ENCODE measurements at regions of chr6 and their contacts with region 1.

Region 1: DNA sequence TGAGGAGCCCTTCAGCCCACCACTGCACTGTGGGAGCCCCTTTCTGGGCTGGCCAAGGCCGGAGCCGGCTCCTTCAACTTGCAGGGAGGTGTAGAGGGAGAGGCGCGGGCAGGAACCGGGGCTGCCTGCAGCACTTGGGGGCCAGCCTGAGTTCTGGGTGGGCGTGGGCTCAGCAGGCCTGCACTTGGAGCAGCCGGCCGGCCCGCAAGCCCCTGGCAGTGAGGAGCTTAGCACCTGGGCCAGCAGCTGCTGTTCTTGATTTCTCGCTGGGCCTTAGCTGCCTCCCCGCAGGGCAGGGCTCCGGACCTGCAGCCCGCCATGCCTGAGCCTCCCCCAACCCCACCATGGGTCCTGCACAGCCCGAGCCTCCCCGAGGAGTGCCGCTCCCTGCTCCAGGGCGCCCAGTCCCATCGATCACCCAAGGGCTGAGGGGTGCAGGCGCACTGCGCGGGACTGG is 101.7 kb upstream of the ADGRB3 start:
- DNase-seq: no peak
- H3K4me3 ChIP-seq: no peak overlapping the region
- H3K27ac ChIP-seq: no peak overlapping the region
- H3K4me1 ChIP-seq: no peaks in the 10 kb centered on the region
- H3K27me3 ChIP-seq: no peaks in the 10 kb centered on the region
- CTCF ChIP-seq: no peak
- EP300 ChIP-seq: no peak
- POLR2A ChIP-seq: no peak

Region 2: GRCh38 chr6:68516779-68517178 is 16.6 kb before region 1 on chr6:
- intact Hi-C with region 1: loop called (anchors 2 kb)
- DNase-seq: no peak
- H3K4me3 ChIP-seq: no peak overlapping the region
- H3K27ac ChIP-seq: no peak overlapping the region
- H3K4me1 ChIP-seq: no peaks in the 10 kb centered on the region
- H3K27me3 ChIP-seq: no peaks in the 10 kb centered on the region
- CTCF ChIP-seq: no peak
- EP300 ChIP-seq: no peak
- POLR2A ChIP-seq: no peak

Region 3: DNA sequence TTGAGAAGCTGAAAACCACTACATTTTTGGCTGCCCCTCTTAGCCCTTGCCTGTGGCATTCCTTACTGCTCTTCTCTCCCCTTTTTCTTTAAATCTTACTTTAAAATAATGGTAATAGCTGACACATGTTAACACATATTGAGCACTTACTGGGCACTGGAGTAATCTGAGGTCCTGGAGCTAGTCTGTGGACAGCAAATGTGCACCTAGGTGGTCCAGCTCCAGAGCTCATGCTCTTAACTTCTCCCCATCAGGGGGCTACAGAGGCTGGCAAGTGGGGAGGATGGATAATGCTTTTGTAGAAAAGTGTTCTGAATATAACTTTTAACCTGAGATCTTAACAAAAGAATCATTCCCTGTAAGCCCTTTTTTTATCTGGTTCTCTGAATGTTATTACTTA is 176.5 kb after region 1 on chr6:
- intact Hi-C with region 1: no loop called
- DNase-seq: no peak
- H3K4me3 ChIP-seq: no peak overlapping the region
- H3K27ac ChIP-seq: no peak overlapping the region
- H3K4me1 ChIP-seq: no peaks in the 10 kb centered on the region
- H3K27me3 ChIP-seq: no peaks in the 10 kb centered on the region
- CTCF ChIP-seq: no peak
- EP300 ChIP-seq: no peak
- POLR2A ChIP-seq: no peak